Esophagus muscularis mucosa (tissue), 4 donors: ENCODE measurements at regions of chr2 and their contacts with region 1.

Region 1: GRCh38 chr2:144510294-144510991 is 9.5 kb downstream of the ZEB2 start:
- DNase-seq: no peak
- H3K4me3 ChIP-seq: peak overlapping the region; percentile 19 to 82 (median 50)
- H3K27ac ChIP-seq: peak overlapping the region; percentile 87 to 90 (median 89)
- H3K4me1 ChIP-seq: peaks cover 4 to 38% (median 9%) of the 10 kb centered on the region in 4 donors
- H3K27me3 ChIP-seq: peaks cover 0 to 50% (median 2%) of the 10 kb centered on the region in 4 donors
- CTCF ChIP-seq: no peak
- EP300 ChIP-seq: no peak
- POLR2A ChIP-seq: no peak

Region 2: GRCh38 chr2:144310484-144310883 is 200.0 kb before region 1 on chr2:
- intact Hi-C with region 1: no loop called
- DNase-seq: no peak
- H3K4me3 ChIP-seq: no peak overlapping the region
- H3K27ac ChIP-seq: no peak overlapping the region
- H3K4me1 ChIP-seq: no peaks in the 10 kb centered on the region
- H3K27me3 ChIP-seq: no peaks in the 10 kb centered on the region
- CTCF ChIP-seq: no peak
- EP300 ChIP-seq: no peak
- POLR2A ChIP-seq: no peak

Region 3: DNA sequence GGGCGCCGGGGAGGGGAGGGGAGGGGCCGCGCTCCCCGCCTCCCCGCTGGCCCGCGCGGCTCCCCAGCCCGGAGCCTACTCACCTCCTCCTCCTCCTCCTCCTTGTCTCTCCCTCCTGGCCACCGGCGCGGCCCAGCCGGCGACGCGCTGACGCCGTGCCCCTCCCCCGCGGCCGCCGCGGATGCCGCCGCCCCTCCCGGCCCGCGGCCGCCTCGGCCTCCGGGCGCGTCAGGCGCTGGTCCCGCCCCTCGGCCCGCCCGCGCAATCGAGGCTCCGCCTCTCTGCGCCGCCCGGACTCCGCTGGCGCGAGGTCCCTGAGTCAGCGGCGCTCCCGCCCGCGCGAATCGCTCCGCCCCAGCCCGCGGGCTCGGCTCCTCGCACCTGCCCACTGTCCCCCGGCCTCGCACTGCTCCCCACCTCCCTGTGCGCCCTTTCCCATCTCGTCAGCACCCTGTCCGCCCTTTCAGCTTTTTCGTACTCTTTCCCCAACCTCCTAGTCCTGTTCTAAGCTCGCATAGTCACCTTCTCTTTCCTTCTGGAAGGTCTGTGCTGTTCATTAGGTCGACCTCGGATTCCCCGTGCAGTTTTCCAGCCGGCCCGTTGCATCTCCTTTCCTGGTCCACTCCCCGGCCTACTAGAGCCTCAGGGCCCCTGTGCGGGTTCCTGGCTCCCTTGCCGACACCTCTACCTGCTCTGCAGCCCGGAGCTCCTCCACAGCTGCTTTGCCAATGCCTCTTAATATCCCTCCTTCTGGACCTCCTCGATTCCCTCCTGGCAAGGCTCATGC is 177.9 kb before region 1 on chr2:
- intact Hi-C with region 1: loop called (anchors 5 kb)
- DNase-seq: no peak
- H3K4me3 ChIP-seq: peak overlapping the region; percentile 72 to 87 (median 84)
- H3K27ac ChIP-seq: peak overlapping the region; percentile 76 to 87 (median 84)
- H3K4me1 ChIP-seq: peaks cover 4 to 18% (median 15%) of the 10 kb centered on the region in 4 donors
- H3K27me3 ChIP-seq: no peaks in the 10 kb centered on the region
- CTCF ChIP-seq: no peak
- EP300 ChIP-seq: no peak
- POLR2A ChIP-seq: no peak

Region 4: DNA sequence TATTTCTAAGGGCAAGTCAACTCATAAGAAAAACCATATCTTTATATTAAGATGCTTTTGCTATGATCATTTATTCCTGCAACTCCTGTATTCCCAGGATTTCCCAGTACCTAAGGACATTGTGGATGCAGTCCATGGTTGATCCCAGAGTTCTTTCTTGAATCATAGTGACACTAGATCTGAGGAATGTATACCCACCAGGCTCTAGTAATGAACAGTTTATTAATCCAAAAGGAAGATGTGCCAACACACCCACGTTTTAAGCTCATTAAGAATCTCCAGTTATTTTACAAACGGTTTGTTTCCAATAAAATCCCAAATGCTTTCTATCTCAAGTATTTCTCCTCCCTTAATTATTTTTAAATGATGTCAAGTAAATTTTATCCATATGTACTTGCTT is 220.3 kb after region 1 on chr2:
- intact Hi-C with region 1: no loop called
- DNase-seq: no peak
- H3K4me3 ChIP-seq: no peak overlapping the region
- H3K27ac ChIP-seq: no peak overlapping the region
- H3K4me1 ChIP-seq: no peaks in the 10 kb centered on the region
- H3K27me3 ChIP-seq: no peaks in the 10 kb centered on the region
- CTCF ChIP-seq: no peak
- EP300 ChIP-seq: no peak
- POLR2A ChIP-seq: no peak